ENCODE measurements at regions of chr19 and their contacts with region 1.

Region 1: GRCh38 chr19:17260842-17261325 is 3.7 kb downstream of the USHBP1 start:
- DNase-seq: peak; percentile 80
- H3K4me3 Mint-ChIP-seq: no peak overlapping the region
- H3K27ac Mint-ChIP-seq: no peak overlapping the region
- H3K4me1 Mint-ChIP-seq: peaks cover 12% of the 10 kb centered on the region
- H3K27me3 Mint-ChIP-seq: no peaks in the 10 kb centered on the region

Region 2: DNA sequence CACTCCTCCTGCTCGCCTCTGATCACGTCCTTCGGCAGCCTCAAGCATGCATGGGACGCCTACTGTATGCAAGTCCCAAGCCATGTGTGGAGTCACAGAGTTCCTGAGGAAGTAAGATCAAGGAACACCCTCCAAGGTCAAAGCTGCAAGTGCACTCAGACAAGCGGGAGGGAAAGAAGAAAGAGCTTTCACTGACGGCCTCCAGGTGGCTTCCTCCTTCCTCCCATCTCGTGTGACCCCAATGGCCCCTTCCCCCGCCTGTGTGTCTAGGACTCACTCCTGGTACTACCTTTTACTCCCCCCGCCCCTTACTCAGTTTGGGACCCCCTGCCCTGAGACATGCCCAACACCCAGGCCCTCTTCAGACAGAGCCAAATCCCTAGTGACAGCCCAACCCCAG is 191.7 kb before region 1 on chr19:
- intact Hi-C with region 1: loop called (anchors 1 kb)
- DNase-seq: no peak
- H3K4me3 Mint-ChIP-seq: no peak overlapping the region
- H3K27ac Mint-ChIP-seq: no peak overlapping the region
- H3K4me1 Mint-ChIP-seq: peaks cover 50% of the 10 kb centered on the region
- H3K27me3 Mint-ChIP-seq: no peaks in the 10 kb centered on the region